GM12878 (cell line): ENCODE measurements at regions of chr9 and their contacts with region 1.

Region 1: DNA sequence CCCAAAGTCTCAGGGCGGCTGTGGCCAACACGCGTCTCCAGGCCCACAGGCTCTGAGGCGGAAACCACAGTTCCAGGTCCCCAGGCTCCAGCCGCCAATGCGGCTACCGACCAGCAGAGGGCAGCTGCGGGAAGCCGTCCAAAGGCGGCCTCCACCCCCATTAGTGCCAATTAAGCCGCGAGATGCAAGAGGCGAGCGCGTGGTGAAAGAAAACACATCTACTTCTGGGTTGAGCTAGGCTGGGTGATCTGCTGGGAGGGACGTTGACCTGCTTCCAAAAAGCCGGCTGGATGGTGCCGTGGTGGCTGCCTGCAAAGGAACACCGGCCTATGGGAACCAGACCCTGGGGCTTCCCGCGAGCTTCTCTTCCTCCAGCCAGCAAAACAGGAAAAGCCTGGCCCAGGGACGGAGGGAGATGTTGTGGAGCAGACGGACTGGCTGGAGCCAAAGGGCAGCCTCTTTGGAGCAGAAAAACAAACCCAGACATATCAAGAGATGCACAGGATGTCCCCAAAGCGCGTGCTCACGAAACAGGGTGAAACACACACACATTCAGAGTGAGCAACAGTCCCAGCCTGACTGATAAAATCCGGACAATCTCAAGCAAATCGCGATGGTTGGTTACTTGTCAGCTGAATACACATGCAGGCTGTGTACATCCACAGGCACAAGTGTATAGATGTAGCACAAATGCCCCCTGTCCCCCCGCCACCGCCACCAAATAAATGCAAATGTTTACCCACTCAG is 187.1 kb upstream of the BRINP1 start:
- DNase-seq: no peak
- ATAC-seq: peak; percentile 100
- H3K4me3 ChIP-seq: no peak overlapping the region
- H3K27ac ChIP-seq: no peak overlapping the region
- H3K4me1 ChIP-seq: no peaks in the 10 kb centered on the region
- H3K27me3 ChIP-seq: no peaks in the 10 kb centered on the region
- CTCF ChIP-seq: peak; percentile 85 to 96 (median 91)
- EP300 ChIP-seq: no peak
- POLR2A ChIP-seq: no peak
- RAD21 ChIP-seq: peak; percentile 72

Region 2: DNA sequence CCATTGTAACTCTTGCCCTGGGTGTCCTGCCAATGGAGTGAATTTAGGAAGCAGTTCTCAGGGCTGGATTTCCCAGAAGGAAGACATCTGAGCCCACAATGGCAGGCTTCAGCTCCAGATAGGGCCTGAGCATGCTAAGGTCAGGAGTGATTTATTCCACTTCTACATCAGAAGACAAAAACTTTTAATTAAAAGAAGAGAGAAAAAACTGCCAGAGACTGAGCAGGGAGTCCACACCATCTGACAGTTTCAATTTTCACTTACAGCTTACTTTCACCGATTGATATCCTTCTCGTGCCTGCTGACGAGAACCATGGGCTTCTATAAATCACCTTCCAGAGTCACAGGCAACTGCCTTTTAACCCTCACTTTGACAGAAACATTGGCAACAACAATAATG is 41.2 kb after region 1 on chr9:
- CTCF ChIA-PET with region 1: no interaction called
- POLR2A ChIA-PET with region 1: no interaction called
- RAD21 ChIA-PET with region 1: no interaction called
- SMC1A ChIA-PET with region 1: no interaction called
- in situ Hi-C with region 1: no loop called
- intact Hi-C with region 1: no loop called
- DNase-seq: no peak
- ATAC-seq: no peak
- H3K4me3 ChIP-seq: no peak overlapping the region
- H3K27ac ChIP-seq: no peak overlapping the region
- H3K4me1 ChIP-seq: no peaks in the 10 kb centered on the region
- H3K27me3 ChIP-seq: no peaks in the 10 kb centered on the region
- CTCF ChIP-seq: no peak
- EP300 ChIP-seq: no peak
- POLR2A ChIP-seq: no peak
- RAD21 ChIP-seq: no peak

Region 3: GRCh38 chr9:119667163-119667562 is 110.9 kb after region 1 on chr9:
- CTCF ChIA-PET with region 1: no interaction called
- POLR2A ChIA-PET with region 1: no interaction called
- RAD21 ChIA-PET with region 1: no interaction called
- SMC1A ChIA-PET with region 1: no interaction called
- in situ Hi-C with region 1: no loop called
- intact Hi-C with region 1: no loop called
- DNase-seq: no peak
- ATAC-seq: no peak
- H3K4me3 ChIP-seq: no peak overlapping the region
- H3K27ac ChIP-seq: no peak overlapping the region
- H3K4me1 ChIP-seq: no peaks in the 10 kb centered on the region
- H3K27me3 ChIP-seq: no peaks in the 10 kb centered on the region
- CTCF ChIP-seq: no peak
- EP300 ChIP-seq: no peak
- POLR2A ChIP-seq: no peak
- RAD21 ChIP-seq: no peak

Region 4: DNA sequence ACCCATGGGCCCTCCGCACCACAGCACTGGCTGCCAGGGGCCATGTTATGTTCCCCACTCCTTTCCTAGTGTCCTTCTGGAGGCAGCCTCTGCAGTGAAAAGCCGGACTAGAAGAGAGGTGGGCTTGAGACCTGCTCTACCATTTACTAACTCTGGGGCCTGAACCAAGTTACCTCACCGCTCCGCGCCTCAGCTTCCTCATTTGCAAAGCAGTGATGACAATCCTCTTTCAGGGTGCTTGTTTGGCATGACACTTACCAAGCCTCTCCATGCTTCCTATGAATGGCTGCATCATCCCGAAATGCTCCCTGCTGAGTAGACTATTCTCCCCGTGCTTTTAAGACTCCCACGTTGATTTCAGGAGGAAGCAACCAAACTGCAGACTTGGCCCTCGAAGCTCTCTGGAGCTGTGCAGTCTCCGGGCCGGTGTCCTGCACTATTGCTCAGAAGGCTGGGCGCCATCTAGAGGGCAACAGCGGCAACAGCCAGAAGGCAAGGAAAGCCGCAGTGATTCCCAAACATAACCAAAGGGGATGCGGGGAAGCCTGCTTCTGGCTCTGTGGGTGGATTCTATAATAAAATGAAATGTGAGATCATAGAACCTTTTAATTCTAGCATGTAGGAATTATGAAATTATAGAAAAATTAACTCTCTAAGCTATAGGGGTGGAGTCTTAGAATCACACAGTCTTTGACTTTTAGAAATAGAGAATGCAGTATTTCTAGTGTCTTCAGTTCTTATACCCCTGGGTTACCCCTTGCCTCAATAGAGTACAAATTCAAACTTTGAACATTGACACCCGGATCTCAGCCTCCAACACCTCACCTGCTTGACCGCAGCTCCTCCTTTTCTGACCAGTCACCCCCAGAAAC is 412.8 kb after region 1 on chr9:
- CTCF ChIA-PET with region 1: interaction called, 21 read pairs
- POLR2A ChIA-PET with region 1: no interaction called
- RAD21 ChIA-PET with region 1: interaction called, 7 read pairs
- SMC1A ChIA-PET with region 1: interaction called, 10 read pairs
- in situ Hi-C with region 1: no loop called
- intact Hi-C with region 1: loop called (anchors 1 kb)
- DNase-seq: no peak
- ATAC-seq: peak; percentile 93
- H3K4me3 ChIP-seq: no peak overlapping the region
- H3K27ac ChIP-seq: no peak overlapping the region
- H3K4me1 ChIP-seq: no peaks in the 10 kb centered on the region
- H3K27me3 ChIP-seq: no peaks in the 10 kb centered on the region
- CTCF ChIP-seq: peak; percentile 84 to 97 (median 93)
- EP300 ChIP-seq: no peak
- POLR2A ChIP-seq: no peak
- RAD21 ChIP-seq: peak; percentile 62